Heart left ventricle (tissue), 16 donors: ENCODE measurements at regions of chr2 and their contacts with region 1.

Region 1: GRCh38 chr2:75765798-75766197 is 55.1 kb upstream of the GCFC2 start:
- DNase-seq: no peak
- ATAC-seq: no peak
- H3K4me3 ChIP-seq: no peak overlapping the region
- H3K27ac ChIP-seq: no peak overlapping the region
- H3K4me1 ChIP-seq: no peaks in the 10 kb centered on the region
- H3K27me3 ChIP-seq: peaks cover 0 to 6% (median 0%) of the 10 kb centered on the region in 9 donors
- CTCF ChIP-seq: no peak
- POLR2A ChIP-seq: no peak

Region 2: DNA sequence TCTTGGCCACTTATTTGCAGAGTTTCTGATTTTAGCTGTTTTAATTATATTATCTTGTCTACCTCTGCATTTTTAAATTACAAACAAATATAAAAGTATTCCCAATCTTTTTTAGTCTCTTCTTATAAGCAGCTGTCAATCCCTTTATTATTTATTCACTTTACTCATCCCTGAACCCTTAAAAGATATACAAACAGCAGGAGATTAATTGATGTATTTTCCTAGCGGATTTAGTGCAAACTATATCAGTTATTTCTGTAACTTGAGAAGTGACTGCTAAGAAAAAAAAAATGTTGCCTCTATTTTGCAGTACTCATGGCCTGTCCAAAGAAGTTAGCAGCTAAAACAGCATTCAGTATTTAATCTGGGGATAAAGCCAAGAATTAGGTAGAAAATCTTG is 13.0 kb before region 1 on chr2:
- intact Hi-C with region 1: loop called in 1 of 10 experiments (anchors 1 kb)
- DNase-seq: no peak
- ATAC-seq: no peak
- H3K4me3 ChIP-seq: no peak overlapping the region
- H3K27ac ChIP-seq: no peak overlapping the region
- H3K4me1 ChIP-seq: no peaks in the 10 kb centered on the region
- H3K27me3 ChIP-seq: no peaks in the 10 kb centered on the region
- CTCF ChIP-seq: no peak
- POLR2A ChIP-seq: no peak